Activated CD4-positive, alpha-beta T cell treated with anti-CD3 and anti-CD28 coated beads, Interleukin-2, amount 10 ng/mL, durations not matched to agents 7 days and 5 days (primary cell): ENCODE measurements at regions of chr6 and their contacts with region 1.

Region 1: DNA sequence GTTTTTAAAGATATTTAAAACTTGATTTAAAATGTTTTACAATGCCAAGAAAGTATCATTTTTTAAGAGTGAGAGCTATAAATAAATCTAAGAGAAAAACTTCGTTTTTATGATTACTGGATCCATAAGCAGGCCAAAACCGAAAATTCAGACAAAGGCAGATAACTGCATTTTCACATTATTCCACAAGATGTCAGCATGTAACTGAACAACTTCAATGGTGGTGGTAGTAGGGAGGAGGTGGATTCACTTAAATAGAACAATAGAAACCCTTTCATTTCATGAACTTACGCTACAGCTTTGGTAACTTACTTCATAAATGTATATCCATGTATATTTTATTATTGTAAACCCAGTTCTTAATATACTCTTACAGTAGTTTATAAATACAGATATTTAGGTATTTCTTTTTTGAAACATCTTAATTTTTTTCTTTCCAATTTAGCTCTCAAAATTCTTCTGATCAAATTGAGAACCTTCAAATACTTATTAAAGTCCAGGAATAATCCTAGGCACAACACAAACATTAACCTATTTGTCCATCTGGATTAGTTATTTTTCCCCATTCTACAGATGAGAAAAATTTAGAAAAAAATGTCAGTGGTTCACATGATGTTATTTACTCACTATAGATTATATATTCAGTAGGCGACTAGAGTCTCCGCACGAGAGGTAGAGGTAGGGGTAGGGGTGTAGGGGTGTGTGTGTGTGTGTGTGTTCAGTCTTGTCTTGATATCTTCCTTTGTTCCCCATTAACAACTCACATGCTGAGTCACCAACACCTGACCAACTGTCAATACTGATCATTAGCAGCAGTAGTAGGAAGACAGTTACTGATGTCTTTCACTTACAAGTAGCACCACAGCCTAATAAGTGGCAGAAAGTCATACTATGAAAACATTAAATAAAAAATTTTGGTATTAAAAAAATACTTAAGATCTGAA is 111.5 kb downstream of the ARHGAP18 start:
- DNase-seq: peak; percentile 49
- H3K4me3 Mint-ChIP-seq: no peak overlapping the region
- H3K27ac Mint-ChIP-seq: no peak overlapping the region
- H3K4me1 Mint-ChIP-seq: no peaks in the 10 kb centered on the region
- H3K27me3 Mint-ChIP-seq: no peaks in the 10 kb centered on the region

Region 2: GRCh38 chr6:129370268-129370916 is 228.1 kb before region 1 on chr6:
- CTCF ChIA-PET with region 1: no interaction called
- POLR2A ChIA-PET with region 1: no interaction called
- DNase-seq: peak; percentile 46
- H3K4me3 Mint-ChIP-seq: no peak overlapping the region
- H3K27ac Mint-ChIP-seq: no peak overlapping the region
- H3K4me1 Mint-ChIP-seq: peaks cover 9% of the 10 kb centered on the region
- H3K27me3 Mint-ChIP-seq: no peaks in the 10 kb centered on the region

Region 3: GRCh38 chr6:129730477-129731165 is 132.1 kb after region 1 on chr6:
- CTCF ChIA-PET with region 1: interaction called, 20 read pairs
- POLR2A ChIA-PET with region 1: no interaction called
- DNase-seq: peak; percentile 53
- H3K4me3 Mint-ChIP-seq: no peak overlapping the region
- H3K27ac Mint-ChIP-seq: peak overlapping the region; percentile 55
- H3K4me1 Mint-ChIP-seq: peaks cover 15% of the 10 kb centered on the region
- H3K27me3 Mint-ChIP-seq: no peaks in the 10 kb centered on the region

Region 4: DNA sequence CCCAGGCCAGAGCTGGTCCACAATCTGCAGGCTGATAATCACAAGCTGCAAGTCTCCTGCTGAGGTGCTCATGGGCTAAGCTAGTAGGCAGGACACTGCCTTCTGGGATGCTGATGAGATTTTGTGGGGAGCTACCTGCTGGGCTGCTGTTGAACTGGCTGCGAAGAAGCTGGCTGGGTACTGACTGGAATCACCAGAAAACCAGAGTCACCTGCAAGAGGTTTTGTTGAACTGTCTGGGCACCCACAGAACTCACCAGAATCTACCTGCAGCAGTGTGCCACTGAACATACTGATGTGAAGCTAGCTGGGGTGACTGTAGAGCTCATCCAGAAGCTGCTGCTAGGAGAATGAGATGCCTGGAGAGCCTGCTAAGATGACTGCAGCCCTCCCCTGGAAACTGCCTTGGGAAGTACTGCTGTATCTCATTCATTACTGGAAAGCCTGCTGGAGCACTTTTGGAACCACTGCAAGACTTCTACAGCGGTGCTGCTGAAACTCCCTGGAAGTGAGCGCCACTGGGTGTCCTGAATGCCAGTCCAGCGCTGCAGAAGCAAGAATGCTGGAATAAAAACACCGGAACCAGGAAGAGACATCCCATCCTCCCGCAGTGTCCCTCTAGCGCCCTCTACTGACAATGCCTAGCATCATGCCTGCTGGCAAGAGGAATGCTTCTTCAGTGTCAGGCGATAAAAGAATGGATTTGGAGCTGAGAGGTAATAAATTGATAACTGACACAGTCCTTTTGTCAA is 176.4 kb after region 1 on chr6:
- CTCF ChIA-PET with region 1: interaction called, 10 read pairs
- POLR2A ChIA-PET with region 1: no interaction called
- DNase-seq: peak; percentile 55
- H3K4me3 Mint-ChIP-seq: no peak overlapping the region
- H3K27ac Mint-ChIP-seq: no peak overlapping the region
- H3K4me1 Mint-ChIP-seq: no peaks in the 10 kb centered on the region
- H3K27me3 Mint-ChIP-seq: peaks cover 23% of the 10 kb centered on the region